A549 (cell line): ENCODE measurements at regions of chr22 and their contacts with region 1.

Region 1: DNA sequence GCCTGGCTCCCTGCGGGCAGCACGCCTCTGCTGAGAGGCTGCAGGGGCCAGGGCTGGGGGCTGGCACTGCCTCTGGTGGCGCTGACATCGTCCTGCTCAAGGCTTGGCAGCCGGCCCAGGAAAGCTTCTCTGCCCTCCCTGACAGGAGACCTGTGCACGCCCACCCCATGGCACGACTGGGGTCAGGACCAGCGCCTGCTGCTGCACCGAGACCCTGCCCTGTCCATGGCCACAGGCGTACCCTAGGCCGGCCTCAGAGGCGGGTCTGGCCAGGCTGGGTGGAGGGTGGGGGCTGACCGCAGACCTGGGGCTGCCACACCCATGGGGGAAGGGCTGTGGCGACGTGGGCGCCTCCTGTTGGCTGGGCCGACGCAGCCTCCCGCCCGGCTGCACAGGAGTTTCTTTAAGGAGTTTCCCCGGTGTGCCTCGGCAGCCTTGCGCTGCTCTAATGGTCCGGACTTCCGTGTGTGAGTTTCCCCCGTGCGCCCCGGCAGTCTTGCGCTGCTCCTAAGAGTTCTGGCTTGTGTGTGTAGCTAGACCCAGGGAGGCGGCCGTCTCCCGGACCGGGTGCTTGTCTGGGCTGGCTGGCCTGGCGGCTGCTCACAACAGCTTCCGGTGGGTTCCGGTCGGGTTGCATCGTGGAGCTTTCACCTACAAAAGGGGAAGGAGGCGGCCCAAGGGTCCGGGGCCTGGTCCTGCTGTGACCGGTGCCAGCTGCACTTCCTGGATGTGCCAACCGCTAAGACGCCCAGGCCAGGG is 4.6 kb downstream of the TRABD start:
- DNase-seq: peak; percentile 68 to 74
- ATAC-seq: peak; percentile 76 to 83
- H3K4me3 ChIP-seq: peak overlapping the region; percentile 56
- H3K27ac ChIP-seq: peak overlapping the region; percentile 79 to 93
- H3K4me1 ChIP-seq: peaks cover 25% of the 10 kb centered on the region
- CTCF ChIP-seq: peak; percentile 36; the same call in 2 of the 3 replicates
- EP300 ChIP-seq: no peak
- POLR2A ChIP-seq: peak; percentile 31; the same call in 1 of the 2 replicates
- RAD21 ChIP-seq: no peak

Region 2: GRCh38 chr22:50209893-50210292 is 19.5 kb after region 1 on chr22:
- CTCF ChIA-PET with region 1: interaction called, 10 read pairs
- POLR2A ChIA-PET with region 1: no interaction called
- DNase-seq: peak; percentile 52 to 58
- ATAC-seq: peak; percentile 77 to 78
- H3K4me3 ChIP-seq: no peak overlapping the region
- H3K27ac ChIP-seq: no peak overlapping the region
- H3K4me1 ChIP-seq: no peaks in the 10 kb centered on the region
- CTCF ChIP-seq: peak; percentile 66
- EP300 ChIP-seq: no peak
- POLR2A ChIP-seq: no peak
- RAD21 ChIP-seq: peak; percentile 54 to 56